ENCODE measurements at regions of chr7 and their contacts with region 1.

Region 1: GRCh38 chr7:19336836-19337235 is 191.6 kb upstream of the FERD3L start:
- DNase-seq: no peak
- ATAC-seq: no peak
- H3K4me3 ChIP-seq: no peak overlapping the region
- H3K4me3 Mint-ChIP-seq: no peak overlapping the region
- H3K27ac ChIP-seq: no peak overlapping the region
- H3K27ac Mint-ChIP-seq: no peak overlapping the region
- H3K4me1 ChIP-seq: no peaks in the 10 kb centered on the region
- H3K4me1 Mint-ChIP-seq: no peaks in the 10 kb centered on the region
- H3K27me3 ChIP-seq: no peaks in the 10 kb centered on the region
- H3K27me3 Mint-ChIP-seq: no peaks in the 10 kb centered on the region
- CTCF ChIP-seq: no peak

Region 2: GRCh38 chr7:19322002-19322401 is 14.8 kb before region 1 on chr7:
- CTCF ChIA-PET with region 1: no interaction called
- POLR2A ChIA-PET with region 1: no interaction called
- intact Hi-C with region 1: loop called in 1 of 2 experiments (anchors 2 kb)
- DNase-seq: no peak
- ATAC-seq: no peak
- H3K4me3 ChIP-seq: no peak overlapping the region
- H3K4me3 Mint-ChIP-seq: no peak overlapping the region
- H3K27ac ChIP-seq: no peak overlapping the region
- H3K27ac Mint-ChIP-seq: no peak overlapping the region
- H3K4me1 ChIP-seq: no peaks in the 10 kb centered on the region
- H3K4me1 Mint-ChIP-seq: no peaks in the 10 kb centered on the region
- H3K27me3 ChIP-seq: no peaks in the 10 kb centered on the region
- H3K27me3 Mint-ChIP-seq: no peaks in the 10 kb centered on the region
- CTCF ChIP-seq: no peak